PC-3 (cell line): ENCODE measurements at regions of chr3 and their contacts with region 1.

Region 1: GRCh38 chr3:3200632-3201212 is 21.2 kb upstream of the CRBN start:
- DNase-seq: peak; percentile 72
- ATAC-seq: peak; percentile 75
- H3K4me3 ChIP-seq: no peak overlapping the region
- H3K27ac ChIP-seq: no peak overlapping the region
- H3K4me1 ChIP-seq: no peaks in the 10 kb centered on the region
- H3K27me3 ChIP-seq: peaks cover 11% of the 10 kb centered on the region; the same call in 1 of the 2 replicates
- CTCF ChIP-seq: peak; percentile 90

Region 2: DNA sequence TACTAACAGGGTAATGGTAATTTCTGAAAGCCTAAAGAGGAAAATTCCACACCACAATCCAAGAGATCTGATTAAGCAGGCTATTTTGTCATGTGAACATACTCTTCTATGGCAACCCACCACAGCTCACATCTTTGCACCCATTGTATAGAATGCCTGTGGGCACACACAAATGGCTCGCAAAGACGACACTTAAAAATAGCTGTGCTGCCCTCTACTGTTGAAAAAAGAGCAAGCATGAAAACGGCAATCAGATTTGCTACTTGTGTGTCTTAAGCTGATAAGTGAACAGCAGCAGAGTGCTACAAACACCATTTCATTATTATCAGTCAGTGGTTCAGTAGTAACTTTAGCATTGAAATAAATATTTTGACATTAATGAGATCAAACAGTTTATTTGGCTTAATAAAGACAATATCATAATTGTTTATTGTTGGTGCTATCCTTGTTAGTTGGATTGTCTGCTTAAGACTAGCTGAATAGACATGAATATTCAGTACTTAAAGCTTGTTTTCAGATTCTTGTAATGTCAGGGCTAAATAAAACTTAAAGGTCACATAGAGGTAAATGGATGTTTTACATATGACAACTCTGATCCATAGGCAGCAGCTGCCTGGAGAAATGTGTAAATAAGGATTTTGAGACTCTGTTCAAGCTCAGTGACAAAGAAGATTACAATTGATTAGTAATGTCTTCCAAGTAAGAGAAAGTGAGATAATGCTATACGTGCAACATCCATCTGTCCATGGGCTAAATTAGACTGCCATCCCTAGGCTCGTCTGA is 797.6 kb after region 1 on chr3:
- CTCF ChIA-PET with region 1: interaction called, 11 read pairs
- POLR2A ChIA-PET with region 1: no interaction called
- intact Hi-C with region 1: loop called (anchors 2 kb)
- DNase-seq: peak; percentile 61
- ATAC-seq: no peak; the same call in 1 of the 2 replicates
- H3K4me3 ChIP-seq: no peak overlapping the region
- H3K27ac ChIP-seq: no peak overlapping the region
- H3K4me1 ChIP-seq: no peaks in the 10 kb centered on the region
- H3K27me3 ChIP-seq: no peaks in the 10 kb centered on the region
- CTCF ChIP-seq: peak; percentile 74

Region 3: GRCh38 chr3:4271834-4272233 is 1071.1 kb after region 1 on chr3:
- CTCF ChIA-PET with region 1: interaction called, 12 read pairs
- POLR2A ChIA-PET with region 1: no interaction called
- intact Hi-C with region 1: loop called (anchors 1 kb)
- DNase-seq: peak; percentile 68
- ATAC-seq: peak; percentile 67
- H3K4me3 ChIP-seq: no peak overlapping the region
- H3K27ac ChIP-seq: no peak overlapping the region
- H3K4me1 ChIP-seq: no peaks in the 10 kb centered on the region
- H3K27me3 ChIP-seq: peaks cover 23% of the 10 kb centered on the region
- CTCF ChIP-seq: peak; percentile 79

Region 4: DNA sequence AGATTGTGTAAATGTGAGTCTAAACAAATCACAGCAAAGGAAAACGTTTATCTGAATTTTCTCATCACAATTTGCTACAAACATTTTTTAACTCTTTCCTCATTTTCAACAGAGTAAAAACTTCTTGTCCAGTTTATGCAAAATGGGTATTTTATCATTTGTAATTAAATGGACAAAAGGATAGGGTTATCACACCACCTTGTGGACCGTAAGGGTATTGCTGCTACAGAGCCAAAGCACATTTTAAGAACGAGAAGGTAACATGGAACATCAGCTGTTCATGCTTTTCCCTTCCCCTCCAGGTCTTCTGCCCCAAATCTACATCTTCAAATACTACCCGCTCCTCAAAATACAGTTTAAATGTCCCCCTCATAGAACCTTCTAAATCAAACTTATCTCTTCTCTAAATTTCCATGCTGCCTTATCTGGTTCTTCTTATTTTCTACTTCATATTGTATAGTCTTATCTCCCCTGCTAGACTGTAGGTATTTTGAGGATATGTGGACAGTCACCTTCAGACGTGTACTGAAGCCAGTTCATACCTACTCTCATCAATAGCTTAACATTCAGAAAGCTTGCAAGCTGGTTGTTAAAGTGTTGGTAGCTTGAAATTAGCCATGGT is 1089.7 kb after region 1 on chr3:
- CTCF ChIA-PET with region 1: interaction called, 4 read pairs
- POLR2A ChIA-PET with region 1: no interaction called
- intact Hi-C with region 1: loop called (anchors 1 kb)
- DNase-seq: peak; percentile 74
- ATAC-seq: peak; percentile 72
- H3K4me3 ChIP-seq: no peak overlapping the region
- H3K27ac ChIP-seq: no peak overlapping the region
- H3K4me1 ChIP-seq: no peaks in the 10 kb centered on the region
- H3K27me3 ChIP-seq: peaks cover 18% of the 10 kb centered on the region; the same call in 1 of the 2 replicates
- CTCF ChIP-seq: peak; percentile 93